Activated CD4-positive, alpha-beta T cell treated with anti-CD3 and anti-CD28 coated beads, Interleukin-2, amount 10 ng/mL, durations not matched to agents 24 days and 14 days (primary cell): ENCODE measurements at regions of chr18 and their contacts with region 1.

Region 1: DNA sequence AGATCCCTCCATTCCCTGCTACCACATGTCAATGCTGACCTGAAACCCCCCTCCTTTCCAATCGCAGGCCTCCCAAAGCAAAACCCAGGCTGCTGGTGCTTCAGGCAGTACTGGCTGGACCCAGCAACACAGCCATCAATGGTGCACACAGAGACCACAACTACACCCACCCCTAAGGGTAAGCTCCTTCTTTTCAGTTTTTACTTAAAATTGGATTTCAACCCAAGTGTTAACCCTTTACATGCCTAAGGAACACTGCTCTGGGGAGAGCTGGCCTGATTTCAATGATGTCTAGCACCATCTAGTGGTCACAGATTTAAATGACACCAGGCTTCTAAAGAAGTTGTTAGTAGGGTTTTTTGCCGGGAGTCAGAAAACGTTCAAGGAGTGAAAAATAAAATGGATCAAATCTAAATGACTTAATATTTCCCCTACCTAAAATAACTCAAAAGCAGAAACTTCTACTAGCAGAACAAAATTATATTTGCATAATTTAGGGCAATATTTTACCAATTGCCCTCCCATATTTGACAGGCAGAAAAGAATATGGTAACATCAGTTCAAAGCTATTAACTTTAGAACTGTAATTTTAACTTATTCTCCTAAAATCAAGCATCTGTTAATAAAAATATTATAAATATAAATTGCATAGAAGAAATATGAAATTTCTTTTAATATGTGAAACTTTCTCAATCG is 24.6 kb downstream of the FECH start:
- DNase-seq: peak; percentile 81
- H3K4me3 Mint-ChIP-seq: no peak overlapping the region
- H3K27ac Mint-ChIP-seq: no peak overlapping the region
- H3K4me1 Mint-ChIP-seq: no peaks in the 10 kb centered on the region
- H3K27me3 Mint-ChIP-seq: no peaks in the 10 kb centered on the region

Region 2: GRCh38 chr18:56709463-56709862 is 852.4 kb before region 1 on chr18:
- intact Hi-C with region 1: loop called (anchors 5 kb)
- DNase-seq: peak; percentile 84
- H3K4me3 Mint-ChIP-seq: no peak overlapping the region
- H3K27ac Mint-ChIP-seq: no peak overlapping the region
- H3K4me1 Mint-ChIP-seq: peaks cover 11% of the 10 kb centered on the region
- H3K27me3 Mint-ChIP-seq: no peaks in the 10 kb centered on the region

Region 3: GRCh38 chr18:56995579-56996188 is 566.2 kb before region 1 on chr18:
- intact Hi-C with region 1: no loop called
- DNase-seq: no peak
- H3K4me3 Mint-ChIP-seq: no peak overlapping the region
- H3K27ac Mint-ChIP-seq: no peak overlapping the region
- H3K4me1 Mint-ChIP-seq: peaks cover 14% of the 10 kb centered on the region
- H3K27me3 Mint-ChIP-seq: no peaks in the 10 kb centered on the region